ENCODE measurements at regions of chr12 and their contacts with region 1.

Region 1: GRCh38 chr12:52879394-52880351 is 25.2 kb downstream of the KRT8 start:
- DNase-seq: peak; percentile 74 to 85 (median 82)
- H3K4me3 ChIP-seq: peak overlapping the region in 4 of 7 experiments; percentile 47 to 77 (median 52)
- H3K27ac ChIP-seq: no peak overlapping the region
- H3K4me1 ChIP-seq: peaks cover 0 to 31% (median 18%) of the 10 kb centered on the region in 4 experiments
- H3K27me3 ChIP-seq: no peaks in the 10 kb centered on the region

Region 2: GRCh38 chr12:52390739-52391617 is 488.7 kb before region 1 on chr12:
- CTCF ChIA-PET with region 1: interaction called, 12 read pairs
- POLR2A ChIA-PET with region 1: interaction called, 4 read pairs
- DNase-seq: peak; percentile 14 to 35 (median 17)
- H3K4me3 ChIP-seq: no peak overlapping the region
- H3K27ac ChIP-seq: no peak overlapping the region
- H3K4me1 ChIP-seq: no peaks in the 10 kb centered on the region
- H3K27me3 ChIP-seq: peaks cover 0 to 13% (median 6%) of the 10 kb centered on the region in 5 experiments

Region 3: DNA sequence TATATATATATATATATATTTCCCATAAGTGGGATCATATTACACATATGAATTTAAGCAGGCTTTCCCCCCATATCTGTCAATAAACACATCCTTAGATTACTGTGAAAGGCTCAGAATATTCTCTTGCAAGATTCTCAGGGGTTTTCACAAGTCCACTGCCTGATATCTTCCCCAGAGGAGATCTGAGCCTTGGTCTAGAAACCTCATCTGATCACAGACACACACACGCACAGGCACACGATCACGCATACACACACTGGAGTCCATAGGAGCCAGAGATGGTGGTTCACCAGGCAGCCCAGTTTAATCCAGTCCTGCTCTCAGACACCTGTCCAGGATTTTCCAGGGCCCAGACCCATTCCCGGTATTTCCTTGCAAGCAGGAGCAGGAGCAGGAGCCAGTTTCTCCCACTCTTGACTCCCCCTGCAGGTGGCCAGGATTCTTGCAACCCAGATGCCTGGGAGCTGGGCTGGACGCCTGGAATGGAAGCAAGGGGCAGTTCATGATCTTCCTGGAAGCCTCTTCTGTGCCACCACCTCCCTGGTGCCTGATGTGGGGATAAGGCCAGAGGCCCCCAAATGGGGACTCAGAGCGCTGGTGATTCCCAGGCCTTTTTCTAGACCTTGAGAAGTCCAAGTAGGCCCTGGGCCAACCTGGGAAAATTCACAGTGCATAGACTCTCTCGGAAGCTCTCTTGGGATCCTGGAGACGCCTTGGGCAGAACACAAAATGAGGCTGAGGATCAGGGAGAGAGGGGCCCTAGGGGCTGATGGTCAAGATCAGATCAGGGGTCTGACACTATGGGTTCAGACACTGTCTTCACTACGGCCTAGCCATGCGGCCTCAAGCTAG is 14.4 kb before region 1 on chr12:
- CTCF ChIA-PET with region 1: interaction called, 32 read pairs
- POLR2A ChIA-PET with region 1: interaction called, 3 read pairs
- DNase-seq: peak; percentile 37 to 78 (median 69)
- H3K4me3 ChIP-seq: no peak overlapping the region
- H3K27ac ChIP-seq: no peak overlapping the region
- H3K4me1 ChIP-seq: peaks cover 0 to 17% (median 11%) of the 10 kb centered on the region in 4 experiments
- H3K27me3 ChIP-seq: no peaks in the 10 kb centered on the region

Region 4: GRCh38 chr12:52942066-52942900 is 62.6 kb after region 1 on chr12:
- CTCF ChIA-PET with region 1: interaction called, 11 read pairs
- POLR2A ChIA-PET with region 1: no interaction called
- DNase-seq: no peak
- H3K4me3 ChIP-seq: no peak overlapping the region
- H3K27ac ChIP-seq: no peak overlapping the region
- H3K4me1 ChIP-seq: no peaks in the 10 kb centered on the region
- H3K27me3 ChIP-seq: peaks cover 0 to 8% (median 0%) of the 10 kb centered on the region in 5 experiments

Region 5: DNA sequence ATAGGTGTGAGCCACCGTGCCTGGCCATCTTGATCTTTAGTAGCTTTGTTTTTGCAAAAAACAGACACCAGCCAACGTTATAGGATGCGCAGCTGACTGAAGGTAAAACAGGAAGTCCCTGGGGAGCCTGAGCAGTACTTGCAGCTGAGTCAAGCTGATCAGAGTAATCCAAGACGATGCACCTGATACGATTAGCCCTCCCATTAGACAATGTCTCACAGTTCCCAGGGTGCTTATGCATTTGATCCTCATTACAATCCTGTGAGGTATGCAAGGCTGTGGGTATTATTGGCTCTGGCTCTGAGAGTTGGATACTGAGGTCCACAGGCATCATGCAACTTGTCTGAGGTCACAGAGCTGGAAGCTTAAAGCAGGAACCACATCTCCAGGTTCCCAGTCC is 77.3 kb after region 1 on chr12:
- CTCF ChIA-PET with region 1: interaction called, 47 read pairs
- POLR2A ChIA-PET with region 1: no interaction called
- DNase-seq: peak in 2 of 3 donors; percentile 46 to 57
- H3K4me3 ChIP-seq: no peak overlapping the region
- H3K27ac ChIP-seq: no peak overlapping the region
- H3K4me1 ChIP-seq: peaks cover 0 to 5% (median 0%) of the 10 kb centered on the region in 4 experiments
- H3K27me3 ChIP-seq: no peaks in the 10 kb centered on the region

Region 6: GRCh38 chr12:53014709-53015108 is 135.0 kb after region 1 on chr12:
- CTCF ChIA-PET with region 1: no interaction called
- POLR2A ChIA-PET with region 1: no interaction called
- DNase-seq: no peak
- H3K4me3 ChIP-seq: no peak overlapping the region
- H3K27ac ChIP-seq: no peak overlapping the region
- H3K4me1 ChIP-seq: peaks cover 0 to 4% (median 2%) of the 10 kb centered on the region in 4 experiments
- H3K27me3 ChIP-seq: no peaks in the 10 kb centered on the region

Measured in common myeloid progenitor, CD34-positive (primary cell).